ENCODE measurements at regions of chr2 and their contacts with region 1.

Region 1: GRCh38 chr2:177296040-177296439 is 31.5 kb upstream of the NFE2L2 start:
- DNase-seq: peak; percentile 50 to 60 (median 58)
- H3K4me3 ChIP-seq: no peak overlapping the region
- H3K27ac ChIP-seq: no peak overlapping the region
- H3K4me1 ChIP-seq: peaks cover 0 to 4% (median 0%) of the 10 kb centered on the region in 4 experiments
- H3K27me3 ChIP-seq: no peaks in the 10 kb centered on the region

Region 2: GRCh38 chr2:177281400-177282180 is 14.4 kb before region 1 on chr2:
- CTCF ChIA-PET with region 1: interaction called, 42 read pairs
- POLR2A ChIA-PET with region 1: no interaction called
- DNase-seq: peak in 2 of 3 donors; percentile 69 to 70
- H3K4me3 ChIP-seq: no peak overlapping the region
- H3K27ac ChIP-seq: no peak overlapping the region
- H3K4me1 ChIP-seq: peaks cover 0 to 40% (median under 1%) of the 10 kb centered on the region in 4 experiments
- H3K27me3 ChIP-seq: no peaks in the 10 kb centered on the region

Region 3: DNA sequence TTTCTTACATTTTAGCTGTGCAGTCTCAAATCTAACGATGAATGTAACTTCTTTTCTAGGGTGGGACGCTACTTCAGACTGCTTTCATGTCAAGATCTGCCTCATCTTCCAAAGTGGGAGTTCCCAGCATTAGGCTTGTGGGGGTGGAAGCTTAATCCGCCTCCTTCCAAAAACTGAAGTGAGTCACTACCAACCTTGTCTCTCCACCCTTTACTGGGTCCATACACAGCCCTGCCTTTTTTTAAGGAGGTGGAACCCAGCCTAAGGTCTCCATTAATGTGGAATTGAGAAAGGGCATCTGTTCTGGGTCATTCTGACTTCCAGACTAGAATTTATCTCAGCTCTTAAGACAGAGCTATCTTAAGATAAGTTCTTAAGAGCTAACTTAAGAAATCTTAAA is 10.5 kb after region 1 on chr2:
- CTCF ChIA-PET with region 1: interaction called, 11 read pairs
- POLR2A ChIA-PET with region 1: no interaction called
- DNase-seq: no peak
- H3K4me3 ChIP-seq: no peak overlapping the region
- H3K27ac ChIP-seq: no peak overlapping the region
- H3K4me1 ChIP-seq: peaks cover 0 to 15% (median 10%) of the 10 kb centered on the region in 4 experiments
- H3K27me3 ChIP-seq: no peaks in the 10 kb centered on the region

Region 4: DNA sequence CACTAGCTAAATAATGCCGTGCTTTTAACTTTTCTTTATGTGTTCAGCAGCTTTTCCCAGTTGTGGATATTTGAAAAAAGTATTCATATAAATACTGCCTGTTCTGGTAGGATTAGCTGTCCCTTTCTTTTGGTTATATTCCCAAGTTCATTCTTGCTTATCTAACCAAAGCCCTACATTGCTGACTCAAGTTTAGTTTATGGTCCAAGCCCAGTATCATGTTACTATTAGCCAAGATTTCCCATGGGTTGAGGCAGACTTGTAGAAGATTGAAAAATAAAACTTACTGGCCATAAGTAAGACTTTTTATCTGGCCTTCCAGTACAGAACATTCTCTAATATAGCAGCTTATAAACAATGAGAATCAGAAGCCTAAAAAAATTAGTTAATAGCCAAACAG is 18.2 kb after region 1 on chr2:
- CTCF ChIA-PET with region 1: interaction called, 11 read pairs
- POLR2A ChIA-PET with region 1: no interaction called
- DNase-seq: no peak
- H3K4me3 ChIP-seq: no peak overlapping the region
- H3K27ac ChIP-seq: no peak overlapping the region
- H3K4me1 ChIP-seq: peaks cover 0 to 14% (median 9%) of the 10 kb centered on the region in 4 experiments
- H3K27me3 ChIP-seq: no peaks in the 10 kb centered on the region

Region 5: GRCh38 chr2:177731384-177731783 is 435.3 kb after region 1 on chr2:
- CTCF ChIA-PET with region 1: no interaction called
- POLR2A ChIA-PET with region 1: no interaction called
- DNase-seq: no peak
- H3K4me3 ChIP-seq: no peak overlapping the region
- H3K27ac ChIP-seq: no peak overlapping the region
- H3K4me1 ChIP-seq: peaks cover 0 to 4% (median 0%) of the 10 kb centered on the region in 4 experiments
- H3K27me3 ChIP-seq: peaks cover 0 to 3% (median 0%) of the 10 kb centered on the region in 5 experiments

Measured in common myeloid progenitor, CD34-positive (primary cell).